Dorsolateral prefrontal cortex (tissue), 120 donors: ENCODE measurements at regions of chr5 and their contacts with region 1.

Region 1: GRCh38 chr5:13994621-13995253 is 50.2 kb upstream of the DNAH5 start:
- DNase-seq: no peak
- H3K4me3 ChIP-seq: peak overlapping the region in 1 of 59 donors; percentile 7
- H3K27ac ChIP-seq: no peak overlapping the region
- H3K27me3 ChIP-seq: peaks cover 0 to 3% (median 0%) of the 10 kb centered on the region in 45 donors
- CTCF ChIP-seq: no peak

Region 2: GRCh38 chr5:14131855-14132503 is 137.2 kb after region 1 on chr5:
- intact Hi-C with region 1: loop called in 1 of 2 experiments (anchors 10 kb)
- DNase-seq: no peak
- H3K4me3 ChIP-seq: no peak overlapping the region
- H3K27ac ChIP-seq: no peak overlapping the region
- H3K27me3 ChIP-seq: peaks cover 0 to 6% (median 0%) of the 10 kb centered on the region in 45 donors
- CTCF ChIP-seq: no peak